ENCODE measurements at regions of chr11 and their contacts with region 1.

Region 1: DNA sequence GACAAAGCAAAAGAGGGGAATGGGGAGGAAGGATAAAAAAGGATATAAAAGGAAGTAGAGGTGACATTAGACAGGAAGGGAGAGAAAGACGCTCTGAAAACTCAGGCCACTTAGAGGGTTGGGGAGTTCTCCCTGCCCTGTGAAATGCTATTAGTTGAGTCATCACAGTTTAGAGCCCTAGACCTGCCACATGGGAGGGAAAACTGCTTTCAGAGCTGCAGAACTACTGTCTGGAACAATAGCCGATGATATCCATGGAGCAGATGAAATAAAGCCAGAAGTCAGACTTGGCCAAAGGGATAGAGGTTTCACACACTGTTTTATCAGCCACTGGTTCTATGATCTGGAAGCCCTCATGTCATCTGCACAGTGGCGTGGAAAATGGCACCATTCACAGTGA is 157.9 kb downstream of the NCAM1 start:
- DNase-seq: no peak
- ATAC-seq: peak; percentile 68
- H3K4me3 ChIP-seq: no peak overlapping the region
- H3K27ac ChIP-seq: peak overlapping the region in 1 of 2 donors; percentile 6
- H3K4me1 ChIP-seq: peaks cover 4% of the 10 kb centered on the region in 2 donors
- H3K27me3 ChIP-seq: no peaks in the 10 kb centered on the region

Region 2: DNA sequence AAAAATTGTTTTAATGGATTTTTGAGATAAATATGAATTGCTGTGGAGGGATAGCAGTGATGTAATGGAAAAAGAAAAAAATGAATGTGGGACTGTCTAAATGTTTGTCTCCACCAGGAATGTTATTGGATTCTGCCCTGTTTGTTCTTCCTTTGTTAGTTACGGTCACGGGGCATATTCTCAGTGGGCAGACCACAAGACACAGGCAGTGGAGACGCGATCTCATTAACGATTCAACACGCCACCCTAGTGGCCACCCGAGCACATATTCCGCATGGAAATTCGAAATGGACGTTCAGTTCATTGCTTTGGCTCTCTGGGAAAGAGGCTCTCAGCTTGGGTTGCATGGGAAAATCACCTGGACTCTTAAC is 43.5 kb after region 1 on chr11:
- intact Hi-C with region 1: loop called in 1 of 2 experiments (anchors 5 kb)
- DNase-seq: no peak
- ATAC-seq: peak; percentile 92
- H3K4me3 ChIP-seq: no peak overlapping the region
- H3K27ac ChIP-seq: peak overlapping the region in 1 of 2 donors; percentile 90
- H3K4me1 ChIP-seq: peaks cover 0 to 11% of the 10 kb centered on the region in 2 donors
- H3K27me3 ChIP-seq: no peaks in the 10 kb centered on the region

Region 3: GRCh38 chr11:113289431-113290187 is 170.5 kb after region 1 on chr11:
- intact Hi-C with region 1: loop called in 1 of 2 experiments (anchors 2 kb)
- DNase-seq: peak; percentile 71 to 85
- ATAC-seq: peak; percentile 72
- H3K4me3 ChIP-seq: no peak overlapping the region
- H3K27ac ChIP-seq: no peak overlapping the region
- H3K4me1 ChIP-seq: no peaks in the 10 kb centered on the region
- H3K27me3 ChIP-seq: no peaks in the 10 kb centered on the region